ENCODE measurements at regions of chr22 and their contacts with region 1.

Region 1: GRCh38 chr22:25465949-25466348 is 98.5 kb upstream of the GRK3 start:
- DNase-seq: no peak
- H3K4me3 ChIP-seq: no peak overlapping the region
- H3K27ac ChIP-seq: no peak overlapping the region
- H3K27me3 ChIP-seq: no peaks in the 10 kb centered on the region
- CTCF ChIP-seq: no peak

Region 2: GRCh38 chr22:25327018-25327755 is 138.8 kb before region 1 on chr22:
- intact Hi-C with region 1: no loop called
- DNase-seq: no peak
- H3K4me3 ChIP-seq: no peak overlapping the region
- H3K27ac ChIP-seq: no peak overlapping the region
- H3K27me3 ChIP-seq: no peaks in the 10 kb centered on the region
- CTCF ChIP-seq: no peak

Region 3: GRCh38 chr22:25702040-25702439 is 236.1 kb after region 1 on chr22:
- intact Hi-C with region 1: loop called (anchors 1 to 5 kb)
- DNase-seq: no peak
- H3K4me3 ChIP-seq: peak overlapping the region in 13 of 59 donors; percentile 2 to 38 (median 13)
- H3K27ac ChIP-seq: peak overlapping the region in 17 of 59 donors; percentile 36 to 83 (median 65)
- H3K27me3 ChIP-seq: no peaks in the 10 kb centered on the region
- CTCF ChIP-seq: peak; percentile 27 to 85 (median 64)

Region 4: GRCh38 chr22:25772288-25772687 is 306.3 kb after region 1 on chr22:
- intact Hi-C with region 1: loop called (anchors 2 to 5 kb)
- DNase-seq: no peak
- H3K4me3 ChIP-seq: no peak overlapping the region
- H3K27ac ChIP-seq: no peak overlapping the region
- H3K27me3 ChIP-seq: no peaks in the 10 kb centered on the region
- CTCF ChIP-seq: no peak